Posterior vena cava (tissue), 2 donors: ENCODE measurements at regions of chr9 and their contacts with region 1.

Region 1: DNA sequence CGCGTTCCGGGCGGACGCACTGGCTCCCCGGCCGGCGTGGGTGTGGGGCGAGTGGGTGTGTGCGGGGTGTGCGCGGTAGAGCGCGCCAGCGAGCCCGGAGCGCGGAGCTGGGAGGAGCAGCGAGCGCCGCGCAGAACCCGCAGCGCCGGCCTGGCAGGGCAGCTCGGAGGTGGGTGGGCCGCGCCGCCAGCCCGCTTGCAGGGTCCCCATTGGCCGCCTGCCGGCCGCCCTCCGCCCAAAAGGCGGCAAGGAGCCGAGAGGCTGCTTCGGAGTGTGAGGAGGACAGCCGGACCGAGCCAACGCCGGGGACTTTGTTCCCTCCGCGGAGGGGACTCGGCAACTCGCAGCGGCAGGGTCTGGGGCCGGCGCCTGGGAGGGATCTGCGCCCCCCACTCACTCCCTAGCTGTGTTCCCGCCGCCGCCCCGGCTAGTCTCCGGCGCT is at the start of gene DAPK1:
- DNase-seq: peak; percentile 87
- total RNA-seq, gene DAPK1: 33.2 to 34.3 TPM

Region 2: DNA sequence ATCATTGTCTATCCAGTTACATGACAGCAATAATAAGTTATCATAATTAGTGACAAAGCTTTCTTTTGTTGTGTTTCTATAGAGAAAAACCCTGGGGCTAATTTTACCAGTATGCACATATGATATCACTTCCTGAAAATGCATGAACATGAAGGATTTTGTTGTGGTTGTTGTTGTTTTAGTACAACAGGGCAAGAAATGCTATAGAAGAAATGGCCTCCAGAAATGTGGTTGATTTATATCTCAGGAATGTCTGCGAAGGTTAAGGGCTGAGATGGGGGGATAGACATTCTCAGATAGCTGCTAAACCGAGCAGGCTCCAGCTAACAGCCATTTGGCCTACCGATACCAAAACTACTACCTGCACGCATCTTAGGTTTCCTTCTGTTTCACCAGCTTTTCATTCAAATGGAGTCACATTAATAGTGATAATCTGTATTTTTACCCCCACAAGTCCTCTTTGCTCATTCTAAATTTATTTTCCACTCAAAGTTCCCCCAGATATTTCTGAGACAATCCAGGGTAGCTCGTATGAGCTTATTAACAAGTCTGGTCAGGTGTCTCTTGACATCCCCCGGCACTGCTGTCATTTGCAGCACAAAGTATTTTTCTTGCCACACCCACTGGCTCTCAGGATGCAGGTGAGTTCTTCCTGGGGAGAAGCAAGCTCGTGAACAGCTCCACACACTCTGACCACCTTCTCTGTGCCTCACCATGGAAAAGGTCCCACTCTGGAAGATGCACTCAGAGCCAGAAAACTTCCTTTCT is 317.9 kb before region 1 on chr9:
- intact Hi-C with region 1: no loop called
- DNase-seq: no peak

Region 3: DNA sequence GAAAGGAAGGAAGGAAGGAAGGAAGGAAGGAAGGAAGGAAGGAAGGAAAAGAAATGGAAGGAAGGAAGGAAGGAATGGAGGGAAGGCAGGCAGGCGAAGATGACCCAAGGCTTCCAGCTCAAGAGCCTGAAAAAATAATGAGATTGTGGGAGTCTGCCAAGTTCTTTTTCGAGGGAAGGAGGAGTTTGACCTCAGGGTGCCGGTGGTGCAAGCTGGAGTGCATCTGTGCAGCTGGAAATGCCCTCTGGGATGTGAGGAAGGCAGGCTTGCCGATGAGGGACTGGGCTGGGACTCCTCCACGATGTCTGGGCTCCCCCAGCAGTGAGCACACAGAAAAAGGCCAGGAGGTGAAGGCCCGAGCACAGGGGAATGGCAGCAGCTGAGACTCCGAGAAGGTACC is 154.9 kb before region 1 on chr9:
- intact Hi-C with region 1: loop called in 1 of 2 experiments (anchors 10 kb)
- DNase-seq: peak; percentile 82

Region 4: DNA sequence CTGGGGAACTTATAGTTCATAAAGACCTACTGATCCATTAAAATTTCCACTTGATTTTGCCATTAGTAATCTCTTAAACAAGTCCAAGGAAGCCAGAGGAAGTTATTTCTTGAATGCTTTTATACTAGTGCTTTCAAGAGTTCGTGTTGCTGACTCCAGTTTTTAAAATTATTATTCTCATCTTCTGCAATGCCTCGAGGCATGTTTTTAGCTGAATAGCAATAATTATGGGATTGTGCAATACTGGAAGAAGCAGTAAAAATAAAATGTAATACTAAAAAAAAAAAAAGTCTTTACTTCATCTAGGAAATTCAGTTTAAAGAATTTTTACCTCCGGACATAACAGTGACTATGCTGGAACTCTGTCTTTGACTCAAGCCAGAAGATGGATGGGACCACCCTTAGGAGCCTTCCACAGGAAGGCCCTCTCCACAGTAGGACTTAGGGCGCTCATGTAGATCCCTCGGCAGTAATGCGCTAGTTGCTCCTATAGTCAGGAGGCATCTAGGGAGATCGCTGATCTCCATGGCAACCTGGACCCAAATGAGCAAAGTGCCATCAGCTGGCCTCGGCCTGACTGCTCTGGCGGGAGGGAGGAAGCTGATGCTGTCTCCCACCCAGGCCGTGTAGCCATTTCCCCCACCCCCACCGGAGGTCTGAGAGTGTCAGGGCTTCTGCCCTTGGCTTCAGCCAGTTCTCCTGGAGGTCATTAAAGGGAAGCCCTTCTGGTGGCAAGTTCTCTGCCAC is 56.7 kb after region 1 on chr9:
- intact Hi-C with region 1: loop called in 1 of 2 experiments (anchors 2 kb)
- DNase-seq: no peak

Region 5: DNA sequence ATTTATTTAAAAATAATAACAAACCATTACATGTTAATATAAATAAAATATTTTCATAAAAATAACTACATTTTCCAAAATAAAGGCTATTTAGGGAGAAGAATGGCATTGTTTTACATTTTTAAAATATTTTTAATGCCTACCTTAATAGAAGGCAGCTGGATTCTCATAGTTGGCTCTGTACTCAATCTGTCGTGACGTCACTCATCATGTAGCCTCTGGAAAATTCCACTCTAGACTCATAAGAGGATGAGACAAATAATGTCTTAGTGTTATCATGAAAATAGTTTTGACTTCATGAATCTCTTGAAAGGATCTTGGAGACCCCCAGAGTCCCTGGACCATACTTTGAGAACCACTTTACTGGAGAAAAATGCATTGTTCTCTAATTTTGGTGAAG is 1130.5 kb after region 1 on chr9:
- intact Hi-C with region 1: loop called in 1 of 2 experiments (anchors 5 kb)
- DNase-seq: no peak